Activated CD4-positive, alpha-beta memory T cell treated with anti-CD3 and anti-CD28 coated beads for 36 hours (primary cell): ENCODE measurements at regions of chr17 and their contacts with region 1.

Region 1: GRCh38 chr17:67244431-67245072 is 444 bp downstream of the HELZ start:
- DNase-seq: no peak
- H3K4me3 Mint-ChIP-seq: peak overlapping the region; percentile 84
- H3K27ac Mint-ChIP-seq: peak overlapping the region; percentile 72
- H3K4me1 Mint-ChIP-seq: peaks cover 54% of the 10 kb centered on the region
- H3K27me3 Mint-ChIP-seq: no peaks in the 10 kb centered on the region

Region 2: GRCh38 chr17:67289181-67289876 is 44.8 kb after region 1 on chr17:
- CTCF ChIA-PET with region 1: no interaction called
- POLR2A ChIA-PET with region 1: no interaction called
- intact Hi-C with region 1: no loop called
- DNase-seq: no peak
- H3K4me3 Mint-ChIP-seq: no peak overlapping the region
- H3K27ac Mint-ChIP-seq: no peak overlapping the region
- H3K4me1 Mint-ChIP-seq: no peaks in the 10 kb centered on the region
- H3K27me3 Mint-ChIP-seq: no peaks in the 10 kb centered on the region

Region 3: GRCh38 chr17:67359960-67360773 is 115.6 kb after region 1 on chr17:
- CTCF ChIA-PET with region 1: no interaction called
- POLR2A ChIA-PET with region 1: interaction called, 3 read pairs
- intact Hi-C with region 1: loop called (anchors 5 kb)
- DNase-seq: peak; percentile 74
- H3K4me3 Mint-ChIP-seq: peak overlapping the region; percentile 65
- H3K27ac Mint-ChIP-seq: peak overlapping the region; percentile 80
- H3K4me1 Mint-ChIP-seq: peaks cover 67% of the 10 kb centered on the region
- H3K27me3 Mint-ChIP-seq: no peaks in the 10 kb centered on the region

Region 4: DNA sequence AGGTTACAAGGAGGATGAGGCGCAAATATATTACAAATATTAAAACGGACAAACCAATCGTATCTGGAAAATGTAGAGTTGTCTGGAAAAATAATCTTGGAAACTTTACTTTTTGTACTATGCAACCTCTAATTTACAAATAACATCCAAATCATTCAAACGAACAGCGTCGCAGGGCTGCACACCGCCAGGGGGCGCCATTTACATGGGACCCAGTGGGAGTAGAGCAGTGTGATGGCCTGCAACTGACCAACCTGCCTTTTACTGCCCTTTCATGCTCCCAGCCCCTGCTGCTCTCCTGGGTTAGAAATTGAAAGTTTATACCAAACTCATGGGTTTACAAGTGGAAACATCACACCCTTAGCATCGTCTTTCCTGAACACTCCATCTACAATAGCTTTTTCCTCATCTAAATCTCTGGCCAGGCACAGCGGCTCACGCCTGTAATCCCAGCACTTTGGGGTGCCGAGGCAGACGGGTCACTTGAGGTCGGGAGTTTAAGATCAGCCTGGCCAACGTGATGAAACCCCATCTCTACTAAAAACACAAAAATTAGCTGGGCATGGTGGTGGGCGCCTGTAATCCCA is 142.5 kb after region 1 on chr17:
- CTCF ChIA-PET with region 1: no interaction called
- POLR2A ChIA-PET with region 1: no interaction called
- intact Hi-C with region 1: no loop called
- DNase-seq: peak; percentile 83
- H3K4me3 Mint-ChIP-seq: no peak overlapping the region
- H3K27ac Mint-ChIP-seq: peak overlapping the region; percentile 62
- H3K4me1 Mint-ChIP-seq: peaks cover 62% of the 10 kb centered on the region
- H3K27me3 Mint-ChIP-seq: no peaks in the 10 kb centered on the region